ENCODE measurements at regions of chr1 and their contacts with region 1.

Region 1: GRCh38 chr1:35298464-35298863 is 30.0 kb downstream of the ZMYM4 start:
- DNase-seq: peak in 3 of 6 donors; percentile 4 to 22 (median 18)
- ATAC-seq: peak; percentile 40 to 92 (median 88)
- H3K4me3 ChIP-seq: no peak overlapping the region
- H3K27ac ChIP-seq: no peak overlapping the region
- H3K4me1 ChIP-seq: peaks cover 0 to 4% (median 0%) of the 10 kb centered on the region in 3 donors
- H3K27me3 ChIP-seq: no peaks in the 10 kb centered on the region
- CTCF ChIP-seq: peak in 2 of 4 donors; percentile 9 to 15

Region 2: DNA sequence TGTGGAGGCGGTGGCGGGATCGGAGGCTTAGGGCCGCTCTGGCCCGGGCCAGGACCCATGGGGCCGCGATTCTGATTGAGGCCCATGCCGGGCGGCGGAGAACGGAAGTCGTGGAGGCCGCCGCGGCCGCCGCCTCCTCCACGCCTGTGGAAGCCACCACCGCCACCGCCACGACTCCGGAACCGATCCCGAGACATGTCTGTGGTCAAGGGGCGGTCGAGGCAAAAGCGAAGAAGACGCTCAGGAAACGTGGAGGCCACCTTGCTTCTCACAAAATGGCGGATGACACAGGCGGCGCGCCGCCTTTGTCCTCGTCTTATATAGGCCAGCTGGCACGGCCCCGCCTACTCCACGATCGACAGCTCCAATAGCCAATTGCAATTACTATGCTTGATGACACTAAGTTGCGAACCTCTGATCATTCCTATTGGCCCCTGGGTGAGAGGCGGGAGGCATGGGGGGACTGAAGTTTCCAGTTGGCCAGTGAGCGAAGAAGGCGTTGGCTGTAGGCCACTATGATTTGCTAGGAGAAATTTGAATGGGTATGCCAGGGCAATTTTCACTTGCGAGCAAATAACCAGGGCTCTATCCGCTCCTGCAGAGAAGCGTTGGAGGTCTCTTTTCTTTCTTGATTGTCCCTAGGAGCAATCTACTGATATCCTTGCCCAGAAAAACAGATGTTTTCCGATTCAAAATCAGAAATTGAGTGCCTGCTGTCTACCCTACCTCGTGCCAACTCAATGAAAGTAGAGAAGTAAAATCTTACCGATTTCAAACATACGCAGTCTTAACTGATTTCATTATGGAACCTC is 105.4 kb before region 1 on chr1 and contains the start of gene SFPQ:
- intact Hi-C with region 1: loop called in 1 of 3 experiments (anchors 10 kb)
- DNase-seq: peak; percentile 96 to 99 (median 97)
- ATAC-seq: peak; percentile 90 to 97 (median 93)
- H3K4me3 ChIP-seq: peak within 1 kb of the TSS; percentile 99 to 100 (median 100)
- H3K27ac ChIP-seq: peak within 1 kb of the TSS; percentile 96 to 99 (median 97)
- H3K4me1 ChIP-seq: peaks cover 17 to 30% (median 23%) of the 10 kb centered on the region in 3 donors
- H3K27me3 ChIP-seq: no peaks in the 10 kb centered on the region
- CTCF ChIP-seq: no peak
- total RNA-seq, gene SFPQ: 63.4 to 112 (median 84.7) TPM

Region 3: GRCh38 chr1:35202048-35202719 is 96.3 kb before region 1 on chr1:
- intact Hi-C with region 1: loop called in 2 of 3 experiments (anchors 10 kb)
- DNase-seq: peak in 4 of 6 donors; percentile 52 to 79 (median 56)
- ATAC-seq: peak; percentile 97 to 100 (median 100)
- H3K4me3 ChIP-seq: no peak overlapping the region
- H3K27ac ChIP-seq: no peak overlapping the region
- H3K4me1 ChIP-seq: no peaks in the 10 kb centered on the region
- H3K27me3 ChIP-seq: no peaks in the 10 kb centered on the region
- CTCF ChIP-seq: peak; percentile 64 to 86 (median 74)

Measured in pancreas (tissue), 10 donors.